ENCODE measurements at regions of chr12 and their contacts with region 1.

Region 1: GRCh38 chr12:1949771-1950470 is 31.5 kb upstream of the CACNA2D4 start:
- DNase-seq: peak in 1 of 2 donors; percentile 64
- H3K4me3 ChIP-seq: no peak overlapping the region
- H3K27ac ChIP-seq: peak overlapping the region; percentile 73 to 87
- H3K4me1 ChIP-seq: no peaks in the 10 kb centered on the region
- H3K27me3 ChIP-seq: no peaks in the 10 kb centered on the region
- CTCF ChIP-seq: no peak
- POLR2A ChIP-seq: no peak

Region 2: DNA sequence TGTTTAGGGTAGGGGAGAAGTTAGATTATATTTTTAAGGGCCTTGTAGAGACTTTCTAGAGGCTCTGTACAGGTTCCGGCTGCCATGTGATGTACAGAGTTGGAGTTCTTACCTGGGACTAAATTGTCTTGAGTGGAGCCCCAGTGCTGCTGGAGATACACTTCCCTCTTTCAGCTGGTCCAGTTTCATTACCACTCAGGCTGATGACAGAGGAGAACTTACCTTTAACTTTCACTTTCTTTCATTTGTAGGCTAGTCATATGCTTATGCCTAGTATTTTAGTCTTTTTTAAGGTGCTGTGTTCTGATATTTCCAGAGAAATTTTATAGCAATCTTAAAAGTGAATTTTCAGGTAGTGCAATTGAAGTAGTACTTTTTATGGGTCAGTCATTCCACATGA is 841.6 kb before region 1 on chr12:
- intact Hi-C with region 1: loop called (anchors 5 kb)
- DNase-seq: no peak
- H3K4me3 ChIP-seq: no peak overlapping the region
- H3K27ac ChIP-seq: no peak overlapping the region
- H3K4me1 ChIP-seq: no peaks in the 10 kb centered on the region
- H3K27me3 ChIP-seq: no peaks in the 10 kb centered on the region
- CTCF ChIP-seq: no peak
- POLR2A ChIP-seq: no peak

Region 3: DNA sequence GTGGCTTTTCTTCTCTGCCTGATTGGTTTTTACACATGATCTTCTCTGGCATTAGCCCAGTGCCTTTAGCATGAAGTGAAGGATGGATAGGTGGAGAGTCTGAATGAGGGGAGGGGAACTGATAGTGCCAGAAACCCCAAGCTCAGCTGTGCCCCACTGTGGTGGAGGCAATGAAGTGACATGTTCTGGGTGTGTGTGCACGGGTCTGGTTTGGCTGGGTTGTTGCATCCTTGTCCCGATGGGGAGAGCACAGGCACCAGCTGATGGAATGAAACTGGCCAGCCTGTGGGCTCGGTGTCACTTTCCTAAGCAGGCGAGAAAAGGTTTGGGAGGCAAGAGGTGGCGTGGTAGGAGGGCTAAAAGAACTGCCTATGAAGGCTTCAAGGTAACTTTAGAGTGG is 168.1 kb after region 1 on chr12:
- intact Hi-C with region 1: no loop called
- DNase-seq: no peak
- H3K4me3 ChIP-seq: no peak overlapping the region
- H3K27ac ChIP-seq: no peak overlapping the region
- H3K4me1 ChIP-seq: no peaks in the 10 kb centered on the region
- H3K27me3 ChIP-seq: no peaks in the 10 kb centered on the region
- CTCF ChIP-seq: no peak
- POLR2A ChIP-seq: no peak